ENCODE measurements at regions of chr10 and their contacts with region 1.

Region 1: GRCh38 chr10:22988581-22989360 is 60.9 kb downstream of the ARMC3 start:
- H3K4me3 Mint-ChIP-seq: no peak overlapping the region
- H3K27ac Mint-ChIP-seq: no peak overlapping the region
- H3K4me1 Mint-ChIP-seq: peaks cover 10% of the 10 kb centered on the region
- H3K27me3 Mint-ChIP-seq: peaks cover 16% of the 10 kb centered on the region

Region 2: DNA sequence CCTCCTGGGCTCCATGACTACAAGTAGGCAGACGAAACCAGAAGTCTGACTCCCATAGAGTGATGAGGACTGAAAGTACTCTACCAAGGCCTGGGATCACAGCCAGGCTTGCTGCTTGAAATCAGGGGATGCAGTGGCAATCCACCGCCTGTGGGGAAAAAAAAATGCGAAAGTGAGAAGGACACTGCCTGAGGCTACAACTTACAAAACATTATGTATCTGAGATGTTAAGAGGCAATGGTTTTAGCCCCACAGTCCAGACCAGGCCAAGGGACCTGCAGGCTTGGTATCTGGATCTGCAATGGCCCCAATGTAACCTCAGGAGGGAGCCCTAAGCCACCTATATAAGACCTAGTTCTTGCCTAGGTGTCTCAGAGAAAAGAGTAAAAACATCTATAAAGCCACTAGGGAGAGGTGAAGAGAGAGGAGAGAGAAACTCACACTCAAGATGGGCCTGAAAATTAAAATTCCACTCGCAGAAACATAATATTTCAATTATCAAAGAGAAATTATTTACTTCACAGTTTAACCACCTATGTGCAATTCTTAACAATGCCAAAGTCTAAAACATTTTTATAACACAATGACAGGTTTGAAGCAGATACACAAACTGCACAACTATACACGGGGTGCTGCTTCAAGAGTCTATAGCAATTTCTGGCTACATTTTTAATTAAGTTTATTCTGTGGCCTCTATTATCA is 999.2 kb before region 1 on chr10:
- intact Hi-C with region 1: loop called (anchors 5 kb)
- H3K4me3 Mint-ChIP-seq: no peak overlapping the region
- H3K27ac Mint-ChIP-seq: no peak overlapping the region
- H3K4me1 Mint-ChIP-seq: peaks cover 13% of the 10 kb centered on the region
- H3K27me3 Mint-ChIP-seq: no peaks in the 10 kb centered on the region

Region 3: DNA sequence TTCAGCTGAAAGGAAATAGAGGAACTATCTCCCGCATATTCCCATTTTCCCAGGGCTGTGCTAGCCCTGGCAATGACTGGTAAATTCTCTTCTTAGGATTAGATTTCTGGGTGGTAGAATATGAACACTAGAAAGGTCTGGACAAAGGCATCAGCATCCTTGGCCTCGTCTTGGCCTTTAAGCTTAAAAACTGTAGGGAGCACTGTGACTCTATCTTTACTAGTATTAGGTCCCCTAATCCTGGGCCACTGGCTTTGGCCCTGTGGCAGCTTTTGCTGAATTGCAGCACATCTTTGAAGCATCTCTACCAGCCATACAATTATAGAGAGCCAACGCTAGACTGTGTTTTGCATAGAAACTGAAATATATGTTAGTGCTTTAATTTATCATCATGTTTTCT is 729.5 kb before region 1 on chr10:
- intact Hi-C with region 1: loop called (anchors 2 kb)
- H3K4me3 Mint-ChIP-seq: no peak overlapping the region
- H3K27ac Mint-ChIP-seq: no peak overlapping the region
- H3K4me1 Mint-ChIP-seq: no peaks in the 10 kb centered on the region
- H3K27me3 Mint-ChIP-seq: peaks cover 13% of the 10 kb centered on the region

Region 4: GRCh38 chr10:22550732-22551131 is 438.0 kb before region 1 on chr10:
- intact Hi-C with region 1: loop called (anchors 2 kb)
- H3K4me3 Mint-ChIP-seq: no peak overlapping the region
- H3K27ac Mint-ChIP-seq: no peak overlapping the region
- H3K4me1 Mint-ChIP-seq: no peaks in the 10 kb centered on the region
- H3K27me3 Mint-ChIP-seq: no peaks in the 10 kb centered on the region

Region 5: GRCh38 chr10:22714479-22715289 is 274.1 kb before region 1 on chr10 and contains the start of gene PIP4K2A:
- intact Hi-C with region 1: loop called (anchors 5 kb)
- H3K4me3 Mint-ChIP-seq: peak within 1 kb of the TSS; percentile 91
- H3K27ac Mint-ChIP-seq: peak within 1 kb of the TSS; percentile 84
- H3K4me1 Mint-ChIP-seq: peaks cover 30% of the 10 kb centered on the region
- H3K27me3 Mint-ChIP-seq: peaks cover 6% of the 10 kb centered on the region